ENCODE measurements at regions of chr5 and their contacts with region 1.

Region 1: GRCh38 chr5:68872088-68872839 is 221.6 kb upstream of the SLC30A5 start:
- DNase-seq: no peak
- ATAC-seq: no peak
- H3K4me3 ChIP-seq: no peak overlapping the region
- H3K27ac ChIP-seq: no peak overlapping the region
- H3K4me1 ChIP-seq: no peaks in the 10 kb centered on the region
- H3K27me3 ChIP-seq: no peaks in the 10 kb centered on the region
- CTCF ChIP-seq: no peak
- EP300 ChIP-seq: no peak
- POLR2A ChIP-seq: no peak
- RAD21 ChIP-seq: no peak

Region 2: GRCh38 chr5:68821056-68821455 is 51.2 kb before region 1 on chr5:
- CTCF ChIA-PET with region 1: no interaction called
- POLR2A ChIA-PET with region 1: no interaction called
- in situ Hi-C with region 1: loop called (anchors 5 kb)
- intact Hi-C with region 1: no loop called
- DNase-seq: no peak
- ATAC-seq: no peak
- H3K4me3 ChIP-seq: no peak overlapping the region
- H3K27ac ChIP-seq: no peak overlapping the region
- H3K4me1 ChIP-seq: no peaks in the 10 kb centered on the region
- H3K27me3 ChIP-seq: peaks cover 0 to 2% of the 10 kb centered on the region in 2 experiments; a peak in 2 of 5 replicates
- CTCF ChIP-seq: no peak
- EP300 ChIP-seq: no peak
- POLR2A ChIP-seq: no peak
- RAD21 ChIP-seq: no peak

Measured in K562 (cell line).